Panc1 (cell line): ENCODE measurements at regions of chr4 and their contacts with region 1.

Region 1: DNA sequence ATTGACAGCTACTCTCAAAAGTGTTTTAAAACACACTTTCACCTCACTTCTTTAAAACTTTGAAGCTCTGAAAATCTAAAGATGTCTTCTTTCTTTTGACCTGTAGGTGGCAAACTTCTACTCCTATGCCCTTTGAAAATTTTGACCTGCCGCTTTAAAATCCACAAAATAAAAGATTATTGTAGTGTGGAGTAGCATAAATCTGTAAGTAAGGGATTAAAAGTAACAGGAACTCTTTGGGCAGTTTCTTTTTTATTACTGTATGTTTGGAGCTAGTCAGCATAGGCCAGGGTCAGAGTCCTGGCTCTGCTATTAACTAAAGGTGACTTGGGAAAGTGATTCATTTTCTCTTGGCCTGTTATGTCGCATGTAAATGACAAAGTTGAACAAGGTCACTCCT is 25.5 kb downstream of the BBS12 start:
- DNase-seq: peak; percentile 35
- ATAC-seq: peak; percentile 63
- H3K4me3 ChIP-seq: no peak overlapping the region
- H3K27ac ChIP-seq: peak overlapping the region; percentile 65
- H3K4me1 ChIP-seq: peaks cover 13% of the 10 kb centered on the region
- H3K27me3 ChIP-seq: no peaks in the 10 kb centered on the region
- CTCF ChIP-seq: peak; percentile 64; the same call in 1 of the 2 replicates

Region 2: GRCh38 chr4:122914292-122914904 is 156.4 kb after region 1 on chr4:
- CTCF ChIA-PET with region 1: interaction called, 8 read pairs
- POLR2A ChIA-PET with region 1: no interaction called
- in situ Hi-C with region 1: no loop called
- intact Hi-C with region 1: loop called (anchors 5 kb)
- DNase-seq: no peak
- ATAC-seq: peak; percentile 90
- H3K4me3 ChIP-seq: no peak overlapping the region
- H3K27ac ChIP-seq: peak overlapping the region; percentile 44
- H3K4me1 ChIP-seq: peaks cover 12% of the 10 kb centered on the region; the same call in 1 of the 2 replicates
- H3K27me3 ChIP-seq: no peaks in the 10 kb centered on the region
- CTCF ChIP-seq: peak; percentile 47; the same call in 1 of the 2 replicates

Region 3: GRCh38 chr4:123007679-123008078 is 249.6 kb after region 1 on chr4:
- CTCF ChIA-PET with region 1: no interaction called
- POLR2A ChIA-PET with region 1: no interaction called
- in situ Hi-C with region 1: no loop called
- intact Hi-C with region 1: no loop called
- DNase-seq: no peak
- ATAC-seq: no peak
- H3K4me3 ChIP-seq: no peak overlapping the region
- H3K27ac ChIP-seq: no peak overlapping the region
- H3K4me1 ChIP-seq: no peaks in the 10 kb centered on the region
- H3K27me3 ChIP-seq: no peaks in the 10 kb centered on the region
- CTCF ChIP-seq: no peak